Activated CD4-positive, alpha-beta T cell treated with anti-CD3 and anti-CD28 coated beads for 36 hours (primary cell): ENCODE measurements at regions of chrX and their contacts with region 1.

Region 1: DNA sequence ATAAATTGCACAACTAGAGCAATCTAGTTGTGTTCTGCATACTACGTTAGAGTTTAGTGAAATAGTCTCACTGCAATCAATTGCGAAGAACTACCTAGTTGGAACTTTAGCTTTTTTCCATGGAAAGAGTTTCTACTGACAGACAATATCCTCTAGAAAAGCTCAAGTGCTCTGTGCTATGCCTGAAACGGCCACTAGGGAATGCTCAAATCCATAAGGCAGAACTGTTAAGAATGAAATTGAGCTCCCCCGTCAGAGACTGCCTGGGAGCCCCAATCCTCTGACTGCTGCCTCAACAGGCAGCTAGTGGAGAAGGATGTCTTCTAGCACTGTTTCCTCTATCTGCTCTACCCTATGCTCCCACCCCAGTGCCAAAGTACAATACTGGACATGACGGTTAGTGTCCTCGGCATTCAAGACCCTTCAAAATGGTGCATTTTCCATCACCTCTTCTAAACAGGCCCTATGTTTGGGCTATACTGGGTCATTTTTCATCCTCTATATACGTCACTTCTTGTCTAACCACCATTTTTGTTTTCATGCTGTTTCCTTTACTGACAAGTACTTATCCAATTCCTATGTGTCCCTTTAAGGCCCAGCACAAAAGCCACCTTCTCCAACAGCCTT is 35.3 kb downstream of the FRMD7 start:
- DNase-seq: peak; percentile 71
- ATAC-seq: peak; percentile 86
- H3K4me3 Mint-ChIP-seq: no peak overlapping the region
- H3K27ac Mint-ChIP-seq: no peak overlapping the region
- H3K4me1 Mint-ChIP-seq: peaks cover 10% of the 10 kb centered on the region
- H3K27me3 Mint-ChIP-seq: peaks cover 2% of the 10 kb centered on the region

Region 2: DNA sequence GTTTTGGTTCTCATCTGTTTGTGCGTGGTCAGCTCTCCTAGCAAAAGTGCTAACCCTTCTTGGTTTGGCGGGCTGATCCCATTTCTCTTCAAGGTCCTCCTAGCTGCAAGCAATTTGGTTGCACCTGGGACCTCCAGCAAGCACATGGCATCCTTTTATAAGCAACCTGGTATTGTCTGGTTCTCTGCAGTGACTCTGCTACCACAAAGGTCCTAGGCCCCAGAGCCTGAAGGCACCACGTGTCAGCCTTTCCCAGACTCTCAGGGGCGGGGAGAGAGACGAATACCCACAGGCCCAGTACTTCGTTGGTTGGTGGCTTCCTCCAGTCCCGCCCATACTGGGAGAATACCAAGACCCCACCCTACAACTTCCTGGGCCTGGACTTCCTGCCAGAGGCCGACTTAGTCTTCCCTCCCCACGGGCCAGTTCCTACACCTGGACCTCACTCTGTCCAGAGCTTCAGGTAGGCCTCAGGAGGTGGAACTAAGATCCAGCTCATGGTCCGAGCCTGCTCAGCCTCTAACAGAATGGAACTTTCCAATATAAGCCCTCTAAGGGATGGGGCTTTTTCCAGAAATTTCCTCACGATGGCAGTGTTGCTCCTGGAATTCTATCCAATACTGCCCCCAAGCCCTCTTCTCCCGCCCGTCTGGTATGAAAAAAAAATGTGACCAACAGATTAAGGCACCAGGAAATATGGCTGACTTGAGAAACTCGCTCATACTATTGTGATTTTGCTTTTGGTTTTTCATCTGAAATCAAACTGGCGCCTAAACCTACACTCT is 262.0 kb before region 1 on chrX:
- CTCF ChIA-PET with region 1: interaction called, 10 read pairs
- POLR2A ChIA-PET with region 1: no interaction called
- intact Hi-C with region 1: no loop called
- DNase-seq: peak; percentile 76
- ATAC-seq: peak; percentile 89
- H3K4me3 Mint-ChIP-seq: peak overlapping the region; percentile 80
- H3K27ac Mint-ChIP-seq: peak overlapping the region; percentile 86
- H3K4me1 Mint-ChIP-seq: peaks cover 25% of the 10 kb centered on the region
- H3K27me3 Mint-ChIP-seq: no peaks in the 10 kb centered on the region

Region 3: DNA sequence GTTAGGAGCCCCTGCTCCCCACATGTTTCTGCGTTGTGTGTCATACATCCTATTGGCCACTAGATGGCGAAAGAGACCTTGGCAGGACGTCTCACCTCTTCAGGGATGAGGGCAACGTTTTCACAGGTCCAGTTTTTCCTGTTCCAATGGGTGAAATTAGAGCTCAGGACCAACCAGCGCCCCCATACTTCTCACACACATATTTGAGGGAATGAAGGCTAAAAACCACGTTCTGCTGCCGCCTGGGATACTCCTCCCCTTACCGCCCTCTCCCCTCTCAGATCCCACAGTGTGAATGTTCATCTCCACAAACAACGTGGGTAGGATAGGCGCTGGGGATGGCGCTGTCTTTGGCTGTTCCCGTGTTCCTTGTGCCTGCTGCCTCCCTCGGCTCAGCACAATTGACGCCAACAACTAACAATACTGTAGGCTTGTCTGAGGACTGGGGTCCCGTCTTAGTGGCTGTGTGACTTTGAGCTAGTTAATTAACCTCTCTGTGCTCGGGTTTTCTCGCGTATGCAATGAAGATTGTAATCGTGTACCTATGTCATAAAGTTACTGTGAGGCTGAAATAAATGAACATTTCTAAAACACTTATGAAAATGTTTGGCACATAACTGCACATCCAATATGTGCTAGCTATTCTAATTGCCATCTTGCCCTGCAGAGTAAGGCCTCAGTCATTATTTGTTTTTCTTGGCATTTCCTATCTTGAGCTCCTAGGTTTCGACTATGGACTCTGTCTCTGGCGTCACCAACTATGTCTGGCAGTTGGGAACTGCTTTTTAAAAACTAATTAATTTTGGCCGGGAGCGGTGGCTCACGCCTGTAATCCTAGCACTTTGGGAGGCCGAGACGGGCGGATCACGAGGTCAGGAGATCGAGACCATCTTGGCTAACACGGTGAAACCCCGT is 250.8 kb before region 1 on chrX:
- CTCF ChIA-PET with region 1: interaction called, 6 read pairs
- POLR2A ChIA-PET with region 1: no interaction called
- intact Hi-C with region 1: loop called in 1 of 2 experiments (anchors 5 kb)
- DNase-seq: peak; percentile 36
- ATAC-seq: peak; percentile 75
- H3K4me3 Mint-ChIP-seq: no peak overlapping the region
- H3K27ac Mint-ChIP-seq: no peak overlapping the region
- H3K4me1 Mint-ChIP-seq: peaks cover 6% of the 10 kb centered on the region
- H3K27me3 Mint-ChIP-seq: no peaks in the 10 kb centered on the region

Region 4: GRCh38 chrX:132107291-132107690 is 14.7 kb after region 1 on chrX:
- CTCF ChIA-PET with region 1: interaction called, 13 read pairs
- POLR2A ChIA-PET with region 1: no interaction called
- intact Hi-C with region 1: no loop called
- DNase-seq: no peak
- ATAC-seq: no peak
- H3K4me3 Mint-ChIP-seq: no peak overlapping the region
- H3K27ac Mint-ChIP-seq: no peak overlapping the region
- H3K4me1 Mint-ChIP-seq: no peaks in the 10 kb centered on the region
- H3K27me3 Mint-ChIP-seq: no peaks in the 10 kb centered on the region

Region 5: DNA sequence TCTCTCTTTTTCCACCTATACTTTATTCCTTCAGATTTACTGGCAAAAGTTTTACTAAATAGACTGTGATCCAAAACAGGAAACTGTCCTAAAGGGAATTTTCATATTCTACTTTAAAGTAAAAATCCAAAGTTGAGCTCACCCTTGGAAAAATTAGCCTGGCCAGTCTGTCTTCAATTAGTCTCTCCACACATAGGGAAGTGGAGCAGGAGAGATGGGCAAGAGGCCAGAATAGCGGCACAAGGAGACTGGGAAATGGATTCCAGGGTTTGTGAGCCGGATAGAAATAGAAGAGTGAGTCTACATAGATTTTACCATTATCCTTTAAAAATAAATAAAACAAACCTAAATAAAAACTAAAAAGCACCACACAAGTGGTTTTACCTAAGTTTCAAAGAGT is 51.5 kb after region 1 on chrX:
- CTCF ChIA-PET with region 1: no interaction called
- POLR2A ChIA-PET with region 1: no interaction called
- intact Hi-C with region 1: no loop called
- DNase-seq: no peak
- ATAC-seq: no peak
- H3K4me3 Mint-ChIP-seq: no peak overlapping the region
- H3K27ac Mint-ChIP-seq: no peak overlapping the region
- H3K4me1 Mint-ChIP-seq: no peaks in the 10 kb centered on the region
- H3K27me3 Mint-ChIP-seq: no peaks in the 10 kb centered on the region

Region 6: DNA sequence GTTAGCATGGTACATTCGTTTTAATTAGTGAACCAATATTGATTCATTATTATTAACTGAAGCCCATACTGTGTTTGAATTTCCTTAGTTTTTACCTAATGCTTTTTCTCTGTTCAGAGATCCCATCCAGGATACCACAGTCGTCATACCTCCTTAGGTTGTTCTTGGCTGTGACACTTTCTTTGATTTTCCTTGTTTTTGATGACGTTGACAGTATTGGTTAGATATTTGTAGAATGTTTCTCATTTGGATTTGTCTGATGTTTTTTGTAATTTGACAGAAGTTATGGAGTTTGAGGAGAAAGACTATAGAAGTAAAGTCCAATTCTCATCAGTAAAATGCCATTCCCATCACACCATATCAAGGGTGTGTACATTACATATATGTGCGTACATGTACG is 142.9 kb after region 1 on chrX:
- CTCF ChIA-PET with region 1: no interaction called
- POLR2A ChIA-PET with region 1: no interaction called
- intact Hi-C with region 1: no loop called
- DNase-seq: no peak
- ATAC-seq: no peak
- H3K4me3 Mint-ChIP-seq: no peak overlapping the region
- H3K27ac Mint-ChIP-seq: no peak overlapping the region
- H3K4me1 Mint-ChIP-seq: peaks cover 9% of the 10 kb centered on the region
- H3K27me3 Mint-ChIP-seq: no peaks in the 10 kb centered on the region

Region 7: DNA sequence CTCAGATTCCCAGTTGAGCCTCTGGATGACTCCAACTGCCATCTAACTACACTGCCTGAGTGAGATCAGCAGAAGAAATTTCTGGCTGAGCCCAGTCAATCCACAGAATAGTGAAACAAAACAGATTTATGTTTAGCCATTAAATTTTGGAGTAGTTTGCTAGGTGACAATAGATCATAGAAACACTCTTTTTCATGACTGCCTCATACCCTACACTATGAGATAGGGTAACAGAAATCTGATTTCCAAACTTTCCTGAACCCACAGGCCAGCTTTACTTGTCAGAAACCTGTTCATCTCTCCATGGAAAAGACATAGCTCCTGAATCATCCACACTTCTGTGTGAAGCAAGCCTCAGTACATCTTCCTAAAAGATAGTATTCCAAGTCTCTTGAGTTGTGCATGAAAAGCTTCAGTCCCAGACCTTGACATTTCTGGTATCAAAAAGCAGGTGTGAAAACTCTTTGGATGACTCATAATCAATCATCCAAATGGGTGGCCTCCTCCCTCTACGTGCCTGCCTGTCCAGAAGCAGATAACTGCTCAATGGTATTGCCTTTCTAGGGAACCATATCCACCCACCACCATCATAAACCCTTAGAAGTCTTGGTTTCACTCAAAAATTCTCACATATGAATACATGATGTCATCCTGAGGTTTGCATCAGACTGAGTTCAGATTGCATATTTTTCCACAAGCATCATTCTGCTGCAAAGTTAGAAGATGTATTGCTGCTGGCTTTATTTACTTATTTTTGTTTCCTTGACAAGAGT is 174.2 kb after region 1 on chrX:
- CTCF ChIA-PET with region 1: interaction called, 4 read pairs
- POLR2A ChIA-PET with region 1: no interaction called
- intact Hi-C with region 1: loop called in 1 of 2 experiments (anchors 5 kb)
- DNase-seq: peak; percentile 51
- ATAC-seq: peak; percentile 93
- H3K4me3 Mint-ChIP-seq: no peak overlapping the region
- H3K27ac Mint-ChIP-seq: peak overlapping the region; percentile 25
- H3K4me1 Mint-ChIP-seq: peaks cover 18% of the 10 kb centered on the region
- H3K27me3 Mint-ChIP-seq: no peaks in the 10 kb centered on the region